ENCODE measurements at regions of chr2 and their contacts with region 1.

Region 1: DNA sequence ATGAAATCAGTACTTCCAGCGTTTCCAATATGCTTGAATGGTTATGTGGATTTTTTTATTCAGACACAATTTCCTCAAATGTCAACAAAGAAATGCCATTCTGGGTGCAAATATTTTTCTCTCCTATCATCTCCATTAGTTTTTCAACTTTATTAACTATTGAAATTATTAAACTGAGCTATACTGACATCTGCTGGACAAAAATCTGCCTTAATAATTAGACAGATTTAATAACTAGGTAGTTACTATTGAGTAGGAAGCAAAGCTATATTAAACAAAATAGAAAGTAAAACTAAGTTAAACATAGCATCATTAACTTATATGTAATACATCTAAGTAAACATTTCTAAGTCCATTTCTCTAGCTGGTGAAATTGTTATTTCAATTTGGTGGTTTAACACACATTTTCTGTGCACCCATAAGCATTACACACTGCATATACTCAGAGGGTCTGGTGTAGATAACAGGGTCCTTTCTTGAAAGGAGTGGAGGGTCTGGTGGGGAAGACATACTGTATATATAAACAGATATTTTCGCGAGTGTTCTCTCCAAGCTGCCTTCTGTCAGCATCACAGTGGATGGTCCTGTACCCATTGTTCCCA is 77.0 kb downstream of the LANCL1 start:
- DNase-seq: no peak
- ATAC-seq: no peak

Region 2: GRCh38 chr2:210252699-210253606 is 146.6 kb before region 1 on chr2:
- intact Hi-C with region 1: loop called (anchors 5 kb)
- DNase-seq: no peak
- ATAC-seq: no peak

Region 3: GRCh38 chr2:210460322-210461227 is 61.0 kb after region 1 on chr2:
- intact Hi-C with region 1: no loop called
- DNase-seq: no peak
- ATAC-seq: no peak